Right ventricle myocardium inferior (tissue), 1 donor: ENCODE measurements at regions of chr13 and their contacts with region 1.

Region 1: GRCh38 chr13:33017323-33017929 is 1.2 kb downstream of the KL start:
- DNase-seq: no peak
- ATAC-seq: peak; percentile 86

Region 2: DNA sequence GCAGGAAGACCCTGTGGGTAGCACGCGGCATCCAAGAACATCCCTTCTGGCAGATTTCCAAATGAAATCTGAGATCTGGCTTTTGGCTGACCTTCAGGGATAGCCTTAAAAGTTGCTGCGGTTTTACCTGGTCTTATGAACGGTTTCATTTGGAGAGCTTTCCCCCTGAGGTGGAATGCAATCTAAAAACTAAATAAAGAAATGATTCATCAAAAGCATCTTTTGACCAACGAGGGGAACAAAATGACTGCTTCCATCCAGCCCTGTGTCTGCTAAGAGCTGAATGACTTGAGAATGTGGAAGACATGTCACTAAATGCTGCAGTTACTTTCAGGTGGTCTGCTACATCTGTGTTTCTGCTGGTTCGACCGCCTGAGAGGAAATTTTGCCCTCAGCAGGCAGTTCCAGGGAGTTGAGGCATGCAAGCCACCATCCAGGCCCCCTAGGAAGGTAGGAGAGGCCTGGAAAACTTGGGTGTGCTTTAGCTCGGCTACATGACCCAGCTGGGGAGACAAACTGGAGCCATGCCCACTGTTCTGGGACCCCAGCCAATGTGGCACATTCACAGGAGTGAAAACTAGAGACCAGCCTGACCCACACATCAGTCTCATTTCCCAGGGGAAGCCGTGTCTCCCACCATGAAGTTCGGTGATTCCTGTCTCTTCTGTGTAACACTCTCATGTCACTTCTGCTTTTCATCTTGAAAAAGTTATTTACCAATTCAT is 176.3 kb before region 1 on chr13:
- intact Hi-C with region 1: loop called (anchors 10 kb)
- DNase-seq: no peak
- ATAC-seq: peak; percentile 42